ENCODE measurements at regions of chr1 and their contacts with region 1.

Region 1: GRCh38 chr1:32650752-32651460 is at the start of gene RBBP4:
- DNase-seq: peak; percentile 98
- ATAC-seq: peak; percentile 89 to 93
- H3K4me3 ChIP-seq: peak within 1 kb of the TSS; percentile 77 to 90 (median 82)
- H3K27ac ChIP-seq: peak within 1 kb of the TSS; percentile 93 to 100 (median 100)
- H3K4me1 ChIP-seq: peaks cover 27 to 40% of the 10 kb centered on the region in 2 donors
- H3K27me3 ChIP-seq: no peaks in the 10 kb centered on the region
- CTCF ChIP-seq: peak in 1 of 5 experiments; percentile 16
- POLR2A ChIP-seq: peak; percentile 87 to 94
- total RNA-seq, gene RBBP4: 50.0 to 92.3 (median 53.0) TPM

Region 2: DNA sequence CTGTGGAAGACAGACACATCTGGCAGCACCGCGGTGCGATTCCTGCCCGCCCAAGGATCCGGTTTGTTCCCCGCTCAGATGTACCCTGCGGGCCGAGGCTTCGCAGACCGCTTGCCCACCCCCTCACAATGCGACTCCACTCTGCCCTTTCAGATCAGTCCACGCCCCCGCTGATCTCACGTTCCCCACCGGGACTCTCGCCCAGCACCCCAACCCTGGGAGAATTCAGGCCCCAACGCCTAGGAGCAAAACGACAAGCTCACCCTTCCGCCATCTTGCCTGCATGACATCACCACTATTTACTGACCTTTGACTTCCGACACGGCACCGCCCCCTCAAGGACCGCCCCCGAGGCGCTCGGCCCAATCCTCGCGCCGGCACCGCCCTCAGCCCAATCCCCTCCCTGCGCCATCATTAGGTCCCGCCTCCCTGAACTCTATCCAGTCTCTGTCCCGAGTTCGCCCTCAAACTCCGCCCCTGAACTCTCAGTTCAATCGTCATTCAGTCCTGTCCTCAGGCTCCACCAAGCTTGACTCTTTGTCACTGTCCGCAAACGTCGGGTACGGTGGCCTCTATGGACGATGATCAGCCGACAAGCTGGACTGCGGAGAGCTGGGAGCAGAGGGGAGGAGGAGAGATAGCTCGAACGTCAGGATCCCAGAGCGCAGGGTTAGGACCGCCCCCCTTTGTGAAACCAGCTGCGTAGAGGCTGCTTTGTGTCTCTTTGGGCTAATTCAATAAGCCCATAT is 256.6 kb before region 1 on chr1 and contains the start of gene BSDC1:
- in situ Hi-C with region 1: no loop called
- intact Hi-C with region 1: loop called (anchors 2 kb)
- DNase-seq: peak; percentile 98
- ATAC-seq: peak; percentile 96 to 98
- H3K4me3 ChIP-seq: peak within 1 kb of the TSS; percentile 77 to 87 (median 84)
- H3K27ac ChIP-seq: peak within 1 kb of the TSS; percentile 92 to 97 (median 94)
- H3K4me1 ChIP-seq: peaks cover 25 to 39% of the 10 kb centered on the region in 2 donors
- H3K27me3 ChIP-seq: no peaks in the 10 kb centered on the region
- CTCF ChIP-seq: no peak
- POLR2A ChIP-seq: peak; percentile 93 to 95
- total RNA-seq, gene BSDC1: 53.8 to 77.8 (median 62.1) TPM

Region 3: DNA sequence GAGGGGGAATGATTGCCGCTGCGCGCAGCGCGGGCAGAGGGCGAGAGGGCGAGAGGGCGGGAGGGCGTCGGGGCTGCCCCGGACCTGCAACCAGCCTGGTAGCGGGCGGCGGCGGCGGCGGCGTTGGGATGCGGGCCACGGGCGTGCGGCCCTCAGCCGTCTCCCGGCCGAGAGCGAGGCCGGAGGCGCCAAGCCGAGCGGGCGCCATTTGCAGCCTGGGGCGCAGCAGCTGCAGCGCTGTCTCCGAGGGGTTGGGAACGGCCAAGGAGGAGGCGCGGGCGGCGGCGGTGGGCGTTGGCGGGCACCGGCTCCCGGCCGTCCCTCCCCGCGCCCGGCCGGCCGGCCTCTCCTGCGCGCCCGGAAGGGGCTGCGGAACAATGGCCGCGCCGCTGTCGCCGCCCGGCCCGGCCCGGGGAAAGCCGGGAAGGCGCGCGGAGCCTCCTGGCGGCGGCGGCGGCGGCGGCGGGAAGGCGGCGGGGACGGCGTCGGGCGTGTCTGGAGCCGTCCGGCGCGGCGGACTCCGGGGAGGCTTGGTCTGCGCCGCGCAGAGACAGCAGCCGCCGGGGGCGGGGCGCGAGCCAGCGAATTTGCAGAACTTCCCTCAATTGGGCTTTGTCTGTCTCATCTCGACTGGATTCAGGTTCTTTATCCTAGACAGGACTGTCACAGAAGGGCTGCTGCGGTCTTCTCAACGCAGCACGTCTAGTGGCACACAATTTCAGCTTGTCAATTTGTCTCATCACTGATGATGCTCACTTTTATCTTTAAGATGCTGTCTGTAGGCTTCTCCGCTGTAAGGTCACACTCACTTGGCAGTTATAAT is 150.3 kb before region 1 on chr1:
- in situ Hi-C with region 1: no loop called
- intact Hi-C with region 1: loop called (anchors 1 kb)
- DNase-seq: peak; percentile 59 to 76
- ATAC-seq: peak; percentile 55 to 69
- H3K4me3 ChIP-seq: peak overlapping the region; percentile 58 to 71 (median 63)
- H3K27ac ChIP-seq: peak overlapping the region; percentile 89 to 96 (median 92)
- H3K4me1 ChIP-seq: peaks cover 25 to 34% of the 10 kb centered on the region in 2 donors
- H3K27me3 ChIP-seq: no peaks in the 10 kb centered on the region
- CTCF ChIP-seq: peak in 4 of 5 experiments; percentile 36 to 60 (median 51)
- POLR2A ChIP-seq: peak; percentile 54 to 66

Region 4: DNA sequence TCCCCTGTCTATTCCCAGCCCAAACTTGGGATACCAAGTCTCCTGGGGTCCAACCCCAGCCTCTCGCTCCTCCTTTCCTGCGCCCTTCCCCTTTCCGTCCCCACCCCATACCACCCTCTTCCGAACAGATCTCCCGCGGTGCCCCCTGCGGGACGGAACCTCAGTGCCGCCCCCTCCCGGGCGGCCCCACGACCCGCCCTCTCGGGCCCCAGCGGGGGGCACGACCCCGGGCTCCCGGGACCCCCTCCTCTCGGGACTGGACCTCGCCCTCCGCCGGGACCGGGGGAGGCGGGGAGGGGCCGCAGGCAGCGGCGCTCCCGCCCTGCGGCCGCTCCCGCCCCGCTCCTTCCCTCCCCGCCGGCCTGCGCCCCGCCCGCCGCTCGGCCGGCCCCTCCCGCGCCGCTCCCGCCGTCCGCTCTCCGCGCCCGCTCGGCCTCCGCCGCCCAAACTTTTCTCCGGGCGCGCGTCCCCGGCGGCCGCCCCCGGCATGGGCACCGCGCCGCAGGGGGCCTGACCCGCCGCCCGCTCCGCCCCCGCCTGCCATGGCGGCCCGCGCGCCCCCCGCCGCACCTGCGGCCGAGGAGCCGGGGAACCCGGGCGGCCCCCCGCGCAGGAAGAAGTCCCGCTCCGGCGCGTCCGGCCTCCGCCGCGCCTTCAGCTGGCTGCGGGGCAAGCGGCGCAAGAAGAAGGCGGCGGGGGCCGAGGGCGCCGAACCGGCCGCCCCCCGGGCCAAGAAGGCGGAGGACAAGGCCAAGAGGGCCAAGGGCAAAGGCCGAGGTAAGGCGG is 90.7 kb after region 1 on chr1:
- in situ Hi-C with region 1: no loop called
- intact Hi-C with region 1: loop called (anchors 2 kb)
- DNase-seq: no peak
- ATAC-seq: peak; percentile 67 to 69
- H3K4me3 ChIP-seq: peak overlapping the region; percentile 59 to 94 (median 64)
- H3K27ac ChIP-seq: peak overlapping the region; percentile 66 to 82 (median 77)
- H3K4me1 ChIP-seq: peaks cover 6 to 16% of the 10 kb centered on the region in 2 donors
- H3K27me3 ChIP-seq: no peaks in the 10 kb centered on the region
- CTCF ChIP-seq: peak; percentile 25 to 48 (median 37)
- POLR2A ChIP-seq: no peak

Region 5: DNA sequence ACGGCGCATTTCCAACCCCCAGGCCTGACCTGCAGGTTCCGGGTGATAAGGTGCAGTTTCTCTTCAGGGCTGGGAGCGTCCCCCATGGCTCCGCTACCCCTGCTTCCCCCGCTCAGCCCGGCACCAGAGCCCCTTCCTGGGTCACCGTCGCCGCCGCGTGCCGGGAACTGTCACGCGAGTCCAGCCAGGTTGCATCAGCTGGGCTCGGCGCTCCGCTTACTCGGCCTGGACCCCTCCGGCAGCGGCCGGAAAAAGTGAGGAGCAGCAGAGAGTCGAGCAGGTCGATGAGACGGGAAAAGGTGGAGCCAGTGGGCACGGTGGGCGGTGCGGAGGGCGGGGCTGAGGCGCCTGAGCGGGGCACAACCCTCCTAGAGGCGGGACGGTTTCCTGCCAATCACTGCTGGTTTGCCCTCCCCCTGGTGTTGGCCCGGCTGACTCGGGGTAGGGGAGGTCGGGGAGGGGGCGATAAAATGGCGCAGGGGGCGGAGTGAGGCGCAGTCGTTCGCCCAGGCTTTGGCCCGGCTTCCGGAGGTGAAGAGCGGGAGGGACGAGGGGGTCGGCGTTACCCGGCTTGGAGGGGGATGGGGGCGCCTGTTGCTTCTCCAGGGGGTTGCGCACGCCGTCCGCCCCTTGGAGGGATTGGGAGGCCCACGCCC is 166.4 kb after region 1 on chr1 and contains the starts of genes S100PBP and YARS1:
- in situ Hi-C with region 1: no loop called
- intact Hi-C with region 1: loop called (anchors 1 kb)
- DNase-seq: peak; percentile 99
- ATAC-seq: peak; percentile 90 to 92
- H3K4me3 ChIP-seq: peak within 1 kb of the TSS; percentile 91 to 98 (median 93)
- H3K27ac ChIP-seq: peak within 1 kb of the TSS; percentile 95 to 99 (median 96)
- H3K4me1 ChIP-seq: peaks cover 45 to 47% of the 10 kb centered on the region in 2 donors
- H3K27me3 ChIP-seq: no peaks in the 10 kb centered on the region
- CTCF ChIP-seq: peak in 3 of 5 experiments; percentile 28 to 52 (median 39)
- POLR2A ChIP-seq: peak; percentile 97
- total RNA-seq, gene S100PBP: 4.9 to 11.5 (median 9.9) TPM
- total RNA-seq, gene YARS1: 37.8 to 59.4 (median 55.9) TPM